Activated T-helper 1 cell treated with anti-CD3 and anti-CD28 coated beads, Interleukin-12 subunit alpha, Interleukin-12 subunit beta, Interleukin-2, Interleukin-4 antibody, amounts not matched to agents 30 ng/mL and 10 ng/mL and 1 ng/mL, durations not matched to agents 14 hours and 24 hours and 36 hours (primary cell): ENCODE measurements at regions of chr20 and their contacts with region 1.

Region 1: GRCh38 chr20:24469894-24470745 is 691 bp downstream of the SYNDIG1 start:
- DNase-seq: no peak
- H3K4me3 Mint-ChIP-seq: no peak overlapping the region
- H3K27ac Mint-ChIP-seq: no peak overlapping the region
- H3K4me1 Mint-ChIP-seq: no peaks in the 10 kb centered on the region
- H3K27me3 Mint-ChIP-seq: peaks cover 51% of the 10 kb centered on the region

Region 2: DNA sequence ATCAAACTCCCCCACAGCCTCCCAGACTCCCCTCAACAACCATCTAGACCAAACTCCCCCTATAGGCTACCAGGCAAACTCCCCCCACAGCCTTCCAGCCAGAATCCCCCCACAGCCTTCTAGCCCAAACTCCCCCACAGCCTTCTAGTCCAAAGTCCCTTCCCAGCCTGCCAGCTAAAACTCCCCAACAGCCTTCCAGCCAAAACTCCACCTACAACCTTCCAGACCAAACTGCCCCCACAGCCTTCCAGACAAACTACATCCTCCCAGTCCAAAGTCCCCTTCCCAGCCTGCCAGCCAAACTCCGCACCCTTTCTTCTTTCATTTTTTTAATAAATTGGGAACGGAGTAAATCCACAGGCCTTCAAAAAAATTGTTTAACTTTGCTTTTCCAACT is 38.1 kb before region 1 on chr20:
- intact Hi-C with region 1: no loop called
- DNase-seq: no peak
- H3K4me3 Mint-ChIP-seq: no peak overlapping the region
- H3K27ac Mint-ChIP-seq: no peak overlapping the region
- H3K4me1 Mint-ChIP-seq: no peaks in the 10 kb centered on the region
- H3K27me3 Mint-ChIP-seq: peaks cover 4% of the 10 kb centered on the region

Region 3: DNA sequence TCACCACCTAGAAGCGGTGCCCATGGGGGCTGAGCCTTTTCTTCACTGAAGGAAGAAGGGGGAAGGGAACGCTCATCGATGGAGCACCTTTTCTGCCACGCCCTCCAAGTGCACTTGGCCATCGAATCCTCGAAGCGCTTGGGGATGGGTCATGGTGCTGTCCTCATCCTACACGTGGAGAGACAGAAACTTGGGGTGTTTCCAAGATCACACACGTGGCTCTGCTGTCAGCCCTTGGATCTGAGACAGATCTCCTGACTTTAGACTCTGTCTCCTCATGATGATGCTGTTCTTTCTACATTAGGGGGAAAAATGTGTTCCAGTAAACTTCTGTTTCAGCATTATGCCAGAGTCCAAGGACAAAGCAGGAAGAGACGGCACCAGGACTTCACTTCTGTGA is 77.8 kb after region 1 on chr20:
- intact Hi-C with region 1: loop called (anchors 2 kb)
- DNase-seq: no peak
- H3K4me3 Mint-ChIP-seq: no peak overlapping the region
- H3K27ac Mint-ChIP-seq: no peak overlapping the region
- H3K4me1 Mint-ChIP-seq: no peaks in the 10 kb centered on the region
- H3K27me3 Mint-ChIP-seq: no peaks in the 10 kb centered on the region

Region 4: GRCh38 chr20:25081065-25081729 is 611.1 kb after region 1 on chr20:
- intact Hi-C with region 1: loop called (anchors 5 kb)
- DNase-seq: no peak
- H3K4me3 Mint-ChIP-seq: no peak overlapping the region
- H3K27ac Mint-ChIP-seq: no peak overlapping the region
- H3K4me1 Mint-ChIP-seq: peaks cover 9% of the 10 kb centered on the region
- H3K27me3 Mint-ChIP-seq: peaks cover 77% of the 10 kb centered on the region